BJ (cell line): ENCODE measurements at regions of chr19 and their contacts with region 1.

Region 1: GRCh38 chr19:42401365-42402303 is 11.5 kb upstream of the CNFN start:
- DNase-seq: no peak
- H3K4me3 ChIP-seq: peak overlapping the region; percentile 45
- H3K27me3 ChIP-seq: no peaks in the 10 kb centered on the region
- CTCF ChIP-seq: peak; percentile 89

Region 2: GRCh38 chr19:42363614-42364346 is 37.9 kb before region 1 on chr19:
- CTCF ChIA-PET with region 1: no interaction called
- POLR2A ChIA-PET with region 1: no interaction called
- DNase-seq: no peak
- H3K4me3 ChIP-seq: no peak overlapping the region
- H3K27me3 ChIP-seq: no peaks in the 10 kb centered on the region
- CTCF ChIP-seq: no peak

Region 3: DNA sequence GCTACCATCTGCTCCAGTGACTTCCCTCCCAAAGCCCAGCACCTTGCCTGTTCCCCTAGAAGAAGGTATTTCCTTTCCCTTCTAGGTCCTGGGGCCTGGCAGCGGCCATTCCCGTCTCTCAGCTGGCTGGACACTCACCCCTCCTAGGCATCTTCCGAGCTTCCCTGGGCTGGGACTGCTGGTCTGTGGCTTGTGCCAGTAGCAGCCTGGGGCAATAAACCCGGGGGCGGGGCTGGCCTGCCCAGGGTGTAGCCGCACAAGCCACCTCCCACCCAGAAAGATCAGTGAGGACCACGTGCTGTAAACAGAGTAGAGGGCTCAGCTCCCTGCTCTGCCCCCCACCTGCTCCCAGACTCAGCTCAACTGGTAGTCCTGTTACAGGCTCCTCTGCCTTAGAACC is 10.6 kb after region 1 on chr19:
- CTCF ChIA-PET with region 1: interaction called, 14 read pairs
- POLR2A ChIA-PET with region 1: no interaction called
- DNase-seq: no peak
- H3K4me3 ChIP-seq: no peak overlapping the region
- H3K27me3 ChIP-seq: no peaks in the 10 kb centered on the region
- CTCF ChIP-seq: no peak

Region 4: DNA sequence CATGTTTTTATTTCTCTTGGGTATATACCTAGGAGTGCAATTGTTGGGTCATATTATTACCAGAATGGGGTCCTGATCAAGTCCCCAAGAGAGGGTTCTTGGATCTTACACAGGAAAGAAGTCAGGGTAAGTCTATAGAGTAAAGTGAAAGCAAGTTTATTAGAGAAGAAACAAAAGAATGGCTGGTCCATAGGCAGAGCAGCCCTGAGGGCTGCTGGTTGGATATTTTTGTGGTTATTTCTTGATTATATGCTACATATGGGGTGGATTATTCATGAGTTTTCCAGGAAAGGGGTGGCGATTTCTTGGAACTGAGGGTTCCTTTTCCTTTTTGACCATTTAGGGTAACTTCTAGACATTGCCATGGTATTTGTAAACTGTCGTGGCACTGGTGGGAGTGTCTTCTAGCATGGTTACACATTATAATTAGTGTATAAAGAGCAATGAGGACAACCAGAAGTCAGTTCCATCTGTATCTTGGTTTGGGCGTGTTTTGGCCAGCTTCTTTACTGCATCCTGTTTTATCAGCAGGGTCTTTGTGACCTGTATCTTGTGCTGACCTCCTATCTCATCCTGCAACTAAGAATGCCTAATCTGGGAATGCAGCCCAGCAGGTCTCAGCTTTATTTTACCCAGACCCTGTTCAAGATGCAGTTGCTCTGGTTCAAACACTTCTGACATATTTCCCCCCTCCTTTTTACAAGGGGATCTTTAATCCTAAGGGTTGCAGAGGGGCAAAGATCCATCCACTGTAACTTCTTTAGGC is 85.6 kb after region 1 on chr19:
- CTCF ChIA-PET with region 1: no interaction called
- POLR2A ChIA-PET with region 1: no interaction called
- DNase-seq: no peak
- H3K4me3 ChIP-seq: no peak overlapping the region
- H3K27me3 ChIP-seq: no peaks in the 10 kb centered on the region
- CTCF ChIP-seq: no peak